Calu3 (cell line): ENCODE measurements at regions of chr4 and their contacts with region 1.

Region 1: DNA sequence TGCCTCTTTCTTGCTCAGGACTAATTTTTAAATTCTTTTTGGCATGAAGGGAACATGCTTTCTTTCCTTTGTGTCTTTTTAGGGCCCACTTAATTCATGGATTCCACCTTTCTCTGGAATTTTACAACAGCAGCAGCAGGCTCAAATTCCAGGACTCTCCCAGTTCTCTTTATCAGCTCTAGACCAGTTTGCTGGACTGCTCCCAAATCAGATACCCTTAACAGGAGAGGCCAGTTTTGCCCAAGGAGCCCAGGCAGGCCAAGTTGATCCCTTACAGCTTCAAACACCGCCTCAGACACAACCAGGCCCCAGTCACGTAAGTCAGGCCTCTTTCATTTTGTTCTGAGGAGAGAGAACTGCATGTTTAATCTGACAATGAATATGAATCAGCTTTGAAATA is 2.3 kb downstream of the ODAM start:
- DNase-seq: peak; percentile 61
- H3K4me3 Mint-ChIP-seq: peak overlapping the region; percentile 61
- H3K27ac Mint-ChIP-seq: peak overlapping the region; percentile 93
- H3K4me1 Mint-ChIP-seq: peaks cover 15% of the 10 kb centered on the region
- H3K27me3 Mint-ChIP-seq: no peaks in the 10 kb centered on the region
- CTCF ChIP-seq: no peak

Region 2: GRCh38 chr4:68904786-68905185 is 1293.1 kb before region 1 on chr4:
- CTCF ChIA-PET with region 1: no interaction called
- intact Hi-C with region 1: no loop called
- DNase-seq: peak; percentile 41
- H3K4me3 Mint-ChIP-seq: peak overlapping the region; percentile 84
- H3K27ac Mint-ChIP-seq: peak overlapping the region; percentile 97
- H3K4me1 Mint-ChIP-seq: peaks cover 38% of the 10 kb centered on the region
- H3K27me3 Mint-ChIP-seq: no peaks in the 10 kb centered on the region
- CTCF ChIP-seq: peak; percentile 25

Region 3: DNA sequence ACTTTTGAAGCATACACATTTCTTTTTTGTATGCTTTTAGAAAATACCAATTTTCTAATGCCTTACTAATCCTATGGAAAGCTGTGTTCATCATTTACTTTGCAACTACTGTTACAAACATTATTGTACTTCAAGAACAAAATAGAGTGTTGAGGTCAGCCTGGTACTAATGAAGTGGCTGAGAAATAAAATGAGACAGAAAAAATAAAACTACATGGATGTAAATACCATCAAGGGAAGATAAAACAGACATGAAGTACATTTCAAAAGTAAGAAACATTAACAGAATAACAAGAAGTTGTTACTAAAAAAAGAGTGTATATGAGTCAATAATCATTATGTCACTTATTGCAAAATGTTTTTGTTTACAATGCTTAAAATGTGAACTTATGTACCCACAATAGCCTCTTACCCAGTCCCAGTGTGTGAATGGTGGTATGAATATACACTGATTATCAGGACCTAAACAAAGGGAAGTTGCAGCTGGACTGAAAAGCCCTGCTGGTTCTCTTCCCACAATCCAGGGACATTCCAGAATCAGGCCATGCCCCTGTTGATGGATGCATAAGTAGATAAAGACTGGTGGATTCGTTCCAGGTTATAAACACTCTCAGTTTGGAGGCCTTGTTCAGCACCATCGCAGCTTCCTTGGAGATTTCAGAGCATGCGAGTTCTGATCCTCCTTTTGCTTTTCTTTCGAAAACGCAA is 42.2 kb after region 1 on chr4:
- CTCF ChIA-PET with region 1: no interaction called
- intact Hi-C with region 1: loop called (anchors 5 kb)
- DNase-seq: no peak
- H3K4me3 Mint-ChIP-seq: no peak overlapping the region
- H3K27ac Mint-ChIP-seq: peak overlapping the region; percentile 54
- H3K4me1 Mint-ChIP-seq: peaks cover 25% of the 10 kb centered on the region
- H3K27me3 Mint-ChIP-seq: no peaks in the 10 kb centered on the region
- CTCF ChIP-seq: no peak

Region 4: DNA sequence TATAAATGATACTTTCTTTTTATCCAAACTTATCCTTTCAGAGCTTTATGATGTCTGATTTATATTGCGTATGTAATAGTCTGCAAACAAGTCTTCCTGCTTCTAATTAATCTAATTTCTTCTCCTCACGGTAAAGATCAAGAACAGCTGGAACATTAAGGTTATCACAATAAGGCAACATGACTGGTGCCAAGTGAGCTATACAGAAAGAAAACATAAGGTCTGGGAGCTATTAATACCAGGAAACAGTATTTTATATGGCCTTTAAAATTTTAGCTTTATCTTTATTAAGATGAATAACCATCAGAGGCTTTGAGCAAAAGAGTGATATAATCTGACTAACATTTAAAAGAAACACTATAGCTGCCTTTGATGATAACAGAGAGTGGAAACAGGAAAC is 108.2 kb after region 1 on chr4:
- CTCF ChIA-PET with region 1: no interaction called
- intact Hi-C with region 1: no loop called
- DNase-seq: no peak
- H3K4me3 Mint-ChIP-seq: no peak overlapping the region
- H3K27ac Mint-ChIP-seq: no peak overlapping the region
- H3K4me1 Mint-ChIP-seq: no peaks in the 10 kb centered on the region
- H3K27me3 Mint-ChIP-seq: no peaks in the 10 kb centered on the region
- CTCF ChIP-seq: no peak